Posterior cingulate gyrus (tissue), 11 donors: ENCODE measurements at regions of chr21 and their contacts with region 1.

Region 1: GRCh38 chr21:31873696-31874599 is 1.1 kb downstream of the HUNK start:
- DNase-seq: peak in 7 of 10 donors; percentile 34 to 91 (median 42)

Region 2: DNA sequence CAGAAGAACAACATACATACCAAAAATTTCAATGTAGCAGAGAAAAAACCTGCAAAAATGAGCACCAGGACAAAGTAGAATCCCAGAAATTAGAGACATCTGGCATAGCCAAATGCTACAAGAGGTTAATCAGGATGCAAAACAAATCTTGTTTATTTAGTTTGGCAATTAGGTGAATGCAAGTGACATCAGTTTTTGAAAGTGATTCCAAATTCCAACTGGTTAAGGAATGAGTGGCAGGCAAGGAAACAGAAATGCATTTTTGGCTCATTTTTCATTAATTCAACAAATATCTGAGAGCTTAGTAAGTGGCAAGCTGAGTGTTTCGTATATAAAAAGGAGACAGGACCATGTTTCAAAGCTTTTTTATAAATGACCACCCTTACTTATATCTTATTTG is 163.4 kb before region 1 on chr21:
- intact Hi-C with region 1: no loop called
- DNase-seq: no peak

Region 3: DNA sequence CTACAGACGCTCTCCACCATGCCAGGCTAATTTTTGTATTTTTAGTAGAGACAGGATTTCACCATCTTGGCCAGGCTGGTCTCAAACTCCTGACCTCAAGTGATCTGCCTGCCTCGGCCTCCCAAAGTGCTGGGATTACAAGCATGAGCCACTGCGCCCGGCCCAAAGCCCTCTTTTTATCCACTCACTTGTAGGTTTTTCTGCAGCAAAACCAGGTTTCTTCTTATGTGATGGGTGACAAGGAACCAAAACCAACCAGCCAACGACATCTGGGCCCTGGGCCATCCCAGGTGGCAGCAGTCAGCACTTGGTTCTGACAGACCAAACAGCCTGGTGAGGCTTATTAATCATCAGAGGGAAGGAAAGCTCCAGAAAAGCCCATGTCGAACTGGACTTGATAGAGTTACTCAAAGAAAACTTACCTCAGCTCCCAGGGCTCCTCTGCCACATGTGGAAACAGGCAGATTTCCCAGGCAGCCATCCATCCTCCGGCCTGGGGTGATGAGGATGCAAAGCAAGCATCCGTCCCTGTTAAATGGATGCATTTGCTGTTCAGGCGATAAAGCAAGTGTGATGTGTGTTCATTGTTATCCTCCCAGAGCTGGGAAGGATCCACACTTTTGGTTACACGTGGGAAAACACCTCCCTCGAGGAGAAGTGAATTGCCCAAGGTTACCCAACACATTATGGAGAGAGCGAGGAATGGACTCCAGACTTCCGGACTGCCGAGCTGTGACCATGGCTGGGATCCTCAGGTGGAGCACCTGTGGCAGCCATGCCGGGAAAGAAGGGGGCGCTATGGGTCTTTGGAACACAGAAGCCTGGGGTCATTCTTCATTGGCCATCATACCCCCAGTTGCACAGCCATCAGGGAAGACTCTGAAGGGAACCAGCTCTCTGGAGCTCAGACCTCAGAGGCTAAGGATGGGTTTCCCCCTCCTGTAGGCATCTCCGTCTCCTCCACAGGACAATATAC is 117.7 kb after region 1 on chr21:
- intact Hi-C with region 1: loop called (anchors 10 kb)
- DNase-seq: no peak

Region 4: GRCh38 chr21:32135401-32136363 is 261.7 kb after region 1 on chr21:
- intact Hi-C with region 1: loop called (anchors 5 kb)
- DNase-seq: peak in 9 of 10 donors; percentile 21 to 95 (median 60)

Region 5: GRCh38 chr21:32270748-32271147 is 396.8 kb after region 1 on chr21:
- intact Hi-C with region 1: no loop called
- DNase-seq: no peak